ENCODE measurements at regions of chr3 and their contacts with region 1.

Region 1: DNA sequence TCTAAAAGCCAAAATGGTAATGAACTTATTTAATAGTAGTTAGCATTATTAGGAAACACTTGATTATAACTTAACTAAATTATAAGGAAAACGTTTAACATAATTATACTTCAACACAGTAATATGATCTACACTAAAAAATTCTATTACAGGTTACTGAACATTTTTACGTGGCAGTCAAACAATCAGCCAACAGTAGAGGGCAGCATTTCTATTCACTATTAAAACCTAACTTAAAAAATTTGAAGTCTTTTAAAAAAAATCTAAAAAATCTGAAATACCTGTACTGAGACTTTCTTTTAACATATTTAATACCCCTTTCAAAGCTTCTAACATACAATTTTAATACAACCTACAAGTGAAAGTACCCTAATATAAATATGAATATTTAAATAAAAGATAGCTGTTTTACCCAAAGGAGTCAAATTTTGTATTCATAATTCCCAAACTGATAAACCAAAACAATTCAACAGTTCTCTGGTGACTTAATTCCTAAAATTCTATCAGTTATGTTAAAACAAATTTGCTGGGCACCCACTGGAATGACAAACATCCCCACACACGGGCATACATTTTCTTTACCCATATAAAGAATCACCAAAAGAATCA is 41.5 kb downstream of the DLG1 start:
- DNase-seq: peak in 1 of 5 donors; percentile 38
- H3K4me3 ChIP-seq: no peak overlapping the region
- H3K27ac ChIP-seq: no peak overlapping the region
- H3K4me1 ChIP-seq: peaks cover 2% of the 10 kb centered on the region
- H3K27me3 ChIP-seq: no peaks in the 10 kb centered on the region
- CTCF ChIP-seq: peak; percentile 34 to 58 (median 49)
- EP300 ChIP-seq: no peak
- POLR2A ChIP-seq: no peak

Region 2: GRCh38 chr3:196739671-196740480 is 517.1 kb before region 1 on chr3 and contains the start of gene PAK2:
- intact Hi-C with region 1: no loop called
- DNase-seq: peak; percentile 89 to 91 (median 90)
- H3K4me3 ChIP-seq: peak within 1 kb of the TSS; percentile 96
- H3K27ac ChIP-seq: peak within 1 kb of the TSS; percentile 91 to 95
- H3K4me1 ChIP-seq: peaks cover 6% of the 10 kb centered on the region
- H3K27me3 ChIP-seq: no peaks in the 10 kb centered on the region
- CTCF ChIP-seq: no peak
- EP300 ChIP-seq: no peak
- POLR2A ChIP-seq: peak; percentile 46
- total RNA-seq, gene PAK2: 24.2 to 57.3 (median 44.2) TPM

Region 3: DNA sequence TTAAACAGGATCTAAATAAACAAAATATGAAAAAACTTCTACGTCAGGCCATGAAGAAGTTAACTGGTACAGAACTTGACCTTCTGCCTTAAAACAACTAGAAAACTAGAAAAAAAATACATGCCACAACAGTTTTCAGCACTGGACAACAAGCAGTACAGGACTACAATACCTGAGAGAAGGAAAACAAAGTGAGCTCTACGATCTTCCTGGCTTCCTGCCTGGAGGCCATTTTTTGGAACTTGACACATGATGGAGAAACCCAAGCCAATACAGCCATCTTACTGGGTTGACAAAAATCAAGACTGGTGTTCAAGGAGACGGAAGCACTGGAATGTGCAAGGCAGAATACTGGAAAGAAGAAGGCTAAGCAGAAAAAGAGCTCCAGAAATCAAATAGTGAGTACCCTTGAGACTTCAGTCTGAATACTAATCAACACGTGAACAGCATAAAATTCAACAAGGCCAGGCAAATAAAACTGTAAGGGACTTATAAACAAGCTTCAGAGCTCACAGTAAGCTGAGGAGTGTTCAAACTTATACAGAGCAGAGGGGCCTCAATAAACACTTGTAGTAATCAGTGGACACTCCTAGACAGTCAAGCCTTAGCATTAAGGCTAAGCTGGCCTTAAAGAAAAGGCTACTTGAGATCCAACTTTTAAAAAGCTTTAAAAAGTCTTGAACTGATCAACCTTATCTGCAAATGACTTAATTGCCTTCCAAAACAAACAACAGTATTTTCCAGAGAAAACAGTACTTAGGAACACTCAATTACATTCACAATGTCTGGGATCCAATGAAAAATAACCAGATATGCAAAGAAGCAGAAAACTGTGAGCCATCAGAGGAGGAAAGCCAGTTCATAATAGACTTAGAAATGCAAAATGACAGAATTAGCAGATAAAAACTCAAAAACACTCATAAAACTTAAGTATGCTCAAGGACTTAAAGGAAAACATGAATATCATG is 21.7 kb before region 1 on chr3:
- intact Hi-C with region 1: no loop called
- DNase-seq: no peak
- H3K4me3 ChIP-seq: no peak overlapping the region
- H3K27ac ChIP-seq: no peak overlapping the region
- H3K4me1 ChIP-seq: no peaks in the 10 kb centered on the region
- H3K27me3 ChIP-seq: no peaks in the 10 kb centered on the region
- CTCF ChIP-seq: no peak
- EP300 ChIP-seq: no peak
- POLR2A ChIP-seq: no peak

Region 4: GRCh38 chr3:197501879-197502620 is 245.1 kb after region 1 on chr3:
- intact Hi-C with region 1: loop called in 1 of 4 experiments (anchors 5 kb)
- DNase-seq: no peak
- H3K4me3 ChIP-seq: no peak overlapping the region
- H3K27ac ChIP-seq: no peak overlapping the region
- H3K4me1 ChIP-seq: no peaks in the 10 kb centered on the region
- H3K27me3 ChIP-seq: no peaks in the 10 kb centered on the region
- CTCF ChIP-seq: no peak
- EP300 ChIP-seq: no peak
- POLR2A ChIP-seq: no peak

Region 5: GRCh38 chr3:197511130-197511529 is 254.2 kb after region 1 on chr3:
- intact Hi-C with region 1: loop called (anchors 2 to 5 kb)
- DNase-seq: no peak
- H3K4me3 ChIP-seq: no peak overlapping the region
- H3K27ac ChIP-seq: no peak overlapping the region
- H3K4me1 ChIP-seq: peaks cover 3% of the 10 kb centered on the region
- H3K27me3 ChIP-seq: no peaks in the 10 kb centered on the region
- CTCF ChIP-seq: no peak
- EP300 ChIP-seq: no peak
- POLR2A ChIP-seq: no peak

Measured in ovary (tissue), 10 donors.